GM12878 (cell line): ENCODE measurements at regions of chrX and their contacts with region 1.

Region 1: DNA sequence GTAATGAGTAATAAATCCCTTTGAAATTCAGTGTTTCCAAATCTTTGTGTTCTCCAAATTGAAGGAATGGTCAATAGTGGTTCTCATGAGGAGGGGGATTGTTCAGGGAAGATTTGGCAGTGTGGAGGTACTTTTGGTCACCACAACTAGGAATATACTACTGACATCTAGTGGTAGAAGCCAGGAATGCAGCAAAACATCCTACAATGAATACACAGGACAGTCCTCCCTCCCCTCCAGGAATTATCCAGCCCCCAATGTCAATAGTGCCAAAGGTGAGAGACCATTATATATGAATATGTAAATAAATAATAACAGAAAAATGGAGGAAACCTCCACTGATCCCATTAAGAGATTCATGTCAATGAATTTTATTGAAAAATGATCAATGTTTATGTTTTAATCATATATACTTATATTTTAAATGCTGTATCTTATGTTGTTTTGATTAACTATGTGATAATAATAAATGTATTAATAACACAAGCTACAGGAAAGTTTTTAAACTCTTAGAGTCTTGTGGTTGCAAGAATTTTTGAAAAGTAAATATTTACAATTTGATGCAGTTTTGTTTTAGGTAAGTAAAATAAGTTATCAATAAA is 14.4 kb upstream of the FAM9A start:
- DNase-seq: peak; percentile 4
- ATAC-seq: peak; percentile 79
- H3K4me3 ChIP-seq: no peak overlapping the region
- H3K27ac ChIP-seq: no peak overlapping the region
- H3K4me1 ChIP-seq: no peaks in the 10 kb centered on the region
- H3K27me3 ChIP-seq: no peaks in the 10 kb centered on the region
- CTCF ChIP-seq: peak; percentile 69 to 84 (median 78)
- EP300 ChIP-seq: no peak
- POLR2A ChIP-seq: no peak
- RAD21 ChIP-seq: peak; percentile 56

Region 2: GRCh38 chrX:7996414-7996813 is 819.2 kb before region 1 on chrX:
- CTCF ChIA-PET with region 1: interaction called, 3 read pairs
- POLR2A ChIA-PET with region 1: no interaction called
- RAD21 ChIA-PET with region 1: no interaction called
- SMC1A ChIA-PET with region 1: interaction called, 3 read pairs
- in situ Hi-C with region 1: loop called (anchors 10 kb)
- intact Hi-C with region 1: loop called (anchors 2 kb)
- DNase-seq: no peak
- ATAC-seq: peak; percentile 91
- H3K4me3 ChIP-seq: no peak overlapping the region
- H3K27ac ChIP-seq: no peak overlapping the region
- H3K4me1 ChIP-seq: no peaks in the 10 kb centered on the region
- H3K27me3 ChIP-seq: no peaks in the 10 kb centered on the region
- CTCF ChIP-seq: peak; percentile 44 to 75 (median 54); a peak in 5 of 6 replicates
- EP300 ChIP-seq: no peak
- POLR2A ChIP-seq: no peak
- RAD21 ChIP-seq: peak; percentile 84

Region 3: DNA sequence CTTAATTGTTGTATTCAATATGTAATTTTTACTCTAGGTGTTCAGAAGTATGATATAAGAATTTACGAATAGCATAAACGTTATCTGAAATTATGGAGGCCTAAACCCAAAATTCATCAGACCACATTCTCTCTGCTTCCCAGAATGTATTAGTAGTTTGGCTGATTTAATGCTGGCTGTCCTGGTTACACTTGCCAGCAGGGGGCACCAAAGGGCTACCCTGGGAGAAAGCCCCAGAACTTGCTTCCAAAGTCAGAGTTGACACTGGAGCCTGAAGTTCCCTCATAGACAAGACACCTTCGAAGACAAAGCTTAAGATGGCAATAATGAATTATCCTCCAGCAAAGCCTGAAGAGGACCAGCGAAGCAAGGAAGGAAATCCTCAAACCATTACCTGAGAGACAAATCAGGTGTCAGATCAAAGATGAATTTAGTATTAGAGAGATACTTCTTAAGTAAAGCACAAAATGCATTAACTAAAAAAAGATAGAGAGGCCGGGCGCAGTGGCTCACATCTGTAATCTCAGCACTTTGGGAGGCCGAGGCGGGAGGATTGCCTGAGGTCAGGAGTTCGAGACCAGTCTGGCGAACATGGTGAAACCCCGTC is 72.3 kb before region 1 on chrX:
- CTCF ChIA-PET with region 1: interaction called, 8 read pairs
- POLR2A ChIA-PET with region 1: no interaction called
- RAD21 ChIA-PET with region 1: interaction called, 4 read pairs
- SMC1A ChIA-PET with region 1: interaction called, 3 read pairs
- in situ Hi-C with region 1: no loop called
- intact Hi-C with region 1: loop called (anchors 1 kb)
- DNase-seq: no peak
- ATAC-seq: peak; percentile 78
- H3K4me3 ChIP-seq: no peak overlapping the region
- H3K27ac ChIP-seq: no peak overlapping the region
- H3K4me1 ChIP-seq: no peaks in the 10 kb centered on the region
- H3K27me3 ChIP-seq: no peaks in the 10 kb centered on the region
- CTCF ChIP-seq: peak; percentile 79 to 84 (median 81)
- EP300 ChIP-seq: no peak
- POLR2A ChIP-seq: no peak
- RAD21 ChIP-seq: peak; percentile 59

Region 4: DNA sequence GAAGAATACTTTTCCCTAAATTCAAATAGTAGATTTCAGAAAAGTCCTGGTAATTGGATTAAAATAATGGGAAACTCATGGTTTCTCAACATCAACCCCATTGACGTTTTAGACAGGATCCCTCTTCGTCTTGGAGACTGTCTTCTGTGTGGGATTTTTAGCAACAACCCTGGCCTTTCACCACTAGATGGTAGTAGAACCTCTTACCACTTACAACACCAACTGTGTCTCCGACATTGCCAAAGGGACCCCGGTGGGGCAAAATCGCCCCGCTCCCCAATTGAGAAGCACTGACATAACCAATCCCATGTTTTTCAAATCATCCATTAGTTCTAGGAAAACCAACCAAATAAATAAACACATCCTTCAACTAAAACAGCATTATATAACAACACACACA is 66.7 kb before region 1 on chrX:
- CTCF ChIA-PET with region 1: interaction called, 16 read pairs
- POLR2A ChIA-PET with region 1: no interaction called
- RAD21 ChIA-PET with region 1: no interaction called
- SMC1A ChIA-PET with region 1: interaction called, 3 read pairs
- in situ Hi-C with region 1: no loop called
- intact Hi-C with region 1: no loop called
- DNase-seq: no peak
- ATAC-seq: peak; percentile 80
- H3K4me3 ChIP-seq: no peak overlapping the region
- H3K27ac ChIP-seq: no peak overlapping the region
- H3K4me1 ChIP-seq: no peaks in the 10 kb centered on the region
- H3K27me3 ChIP-seq: no peaks in the 10 kb centered on the region
- CTCF ChIP-seq: peak; percentile 47 to 63 (median 61)
- EP300 ChIP-seq: no peak
- POLR2A ChIP-seq: no peak
- RAD21 ChIP-seq: peak; percentile 49

Region 5: GRCh38 chrX:9873952-9874351 is 1058.4 kb after region 1 on chrX:
- CTCF ChIA-PET with region 1: no interaction called
- POLR2A ChIA-PET with region 1: no interaction called
- RAD21 ChIA-PET with region 1: no interaction called
- SMC1A ChIA-PET with region 1: interaction called, 3 read pairs
- in situ Hi-C with region 1: no loop called
- intact Hi-C with region 1: loop called (anchors 5 kb)
- DNase-seq: no peak
- ATAC-seq: peak; percentile 99
- H3K4me3 ChIP-seq: no peak overlapping the region
- H3K27ac ChIP-seq: no peak overlapping the region
- H3K4me1 ChIP-seq: no peaks in the 10 kb centered on the region
- H3K27me3 ChIP-seq: peaks cover 0 to 1% of the 10 kb centered on the region in 2 experiments; a peak in 1 of 4 replicates
- CTCF ChIP-seq: peak; percentile 68 to 77 (median 75)
- EP300 ChIP-seq: no peak
- POLR2A ChIP-seq: no peak
- RAD21 ChIP-seq: peak; percentile 59

Region 6: GRCh38 chrX:9988762-9989161 is 1173.2 kb after region 1 on chrX:
- CTCF ChIA-PET with region 1: no interaction called
- POLR2A ChIA-PET with region 1: no interaction called
- RAD21 ChIA-PET with region 1: no interaction called
- SMC1A ChIA-PET with region 1: no interaction called
- in situ Hi-C with region 1: no loop called
- intact Hi-C with region 1: loop called (anchors 10 kb)
- DNase-seq: no peak
- ATAC-seq: peak; percentile 52
- H3K4me3 ChIP-seq: no peak overlapping the region
- H3K27ac ChIP-seq: no peak overlapping the region
- H3K4me1 ChIP-seq: no peaks in the 10 kb centered on the region
- H3K27me3 ChIP-seq: no peaks in the 10 kb centered on the region
- CTCF ChIP-seq: peak; percentile 43 to 71 (median 44); a peak in 4 of 6 replicates
- EP300 ChIP-seq: no peak
- POLR2A ChIP-seq: no peak
- RAD21 ChIP-seq: peak; percentile 69